ENCODE measurements at regions of chr19 and their contacts with region 1.

Region 1: GRCh38 chr19:48683349-48683748 is 10.5 kb upstream of the NTN5 start:
- DNase-seq: no peak
- H3K4me3 ChIP-seq: no peak overlapping the region
- H3K27ac ChIP-seq: no peak overlapping the region
- H3K4me1 ChIP-seq: no peaks in the 10 kb centered on the region; a peak in 1 of 7 replicates
- H3K27me3 ChIP-seq: no peaks in the 10 kb centered on the region
- CTCF ChIP-seq: no peak
- EP300 ChIP-seq: no peak
- POLR2A ChIP-seq: no peak
- RAD21 ChIP-seq: no peak

Region 2: GRCh38 chr19:48624067-48624594 is 59.2 kb before region 1 on chr19:
- CTCF ChIA-PET with region 1: no interaction called
- POLR2A ChIA-PET with region 1: no interaction called
- DNase-seq: peak; percentile 91 to 95
- H3K4me3 ChIP-seq: peak overlapping the region; percentile 53 to 87 (median 80)
- H3K27ac ChIP-seq: peak overlapping the region; percentile 47; the same call in 1 of the 2 replicates
- H3K4me1 ChIP-seq: peaks cover 3 to 13% (median 6%) of the 10 kb centered on the region in 4 experiments; a peak in 6 of 7 replicates
- H3K27me3 ChIP-seq: no peaks in the 10 kb centered on the region
- CTCF ChIP-seq: no peak
- EP300 ChIP-seq: peak in 1 of 2 experiments; percentile 74; a peak in 1 of 3 replicates
- POLR2A ChIP-seq: no peak; a peak in 1 of 3 replicates
- RAD21 ChIP-seq: no peak

Region 3: DNA sequence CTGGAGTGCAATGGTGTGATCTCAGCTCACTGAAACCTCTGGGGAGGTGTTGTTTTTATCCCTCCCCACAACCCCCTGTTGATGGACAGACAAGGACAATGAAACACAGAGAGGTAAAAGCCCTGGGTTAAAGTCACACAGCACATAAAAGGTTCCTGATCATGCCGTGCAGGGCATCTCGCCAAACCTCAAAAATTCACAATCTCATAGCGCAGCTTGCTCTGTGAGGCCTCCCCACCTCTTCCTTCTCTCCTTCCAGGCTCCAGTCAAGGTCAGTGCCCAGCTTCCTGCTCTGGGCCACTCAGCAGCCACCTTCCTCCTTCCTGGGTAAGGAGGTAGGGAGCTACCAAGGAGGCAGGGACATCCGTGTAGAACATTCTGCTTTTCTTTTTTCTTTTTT is 14.7 kb after region 1 on chr19:
- CTCF ChIA-PET with region 1: interaction called, 8 read pairs
- POLR2A ChIA-PET with region 1: interaction called, 18 read pairs
- DNase-seq: no peak
- H3K4me3 ChIP-seq: no peak overlapping the region
- H3K27ac ChIP-seq: no peak overlapping the region
- H3K4me1 ChIP-seq: peaks cover 0 to 5% (median 1%) of the 10 kb centered on the region in 4 experiments; a peak in 4 of 7 replicates
- H3K27me3 ChIP-seq: no peaks in the 10 kb centered on the region
- CTCF ChIP-seq: no peak
- EP300 ChIP-seq: no peak
- POLR2A ChIP-seq: no peak
- RAD21 ChIP-seq: no peak

Measured in H1 (cell line).